Activated T-helper 1 cell treated with anti-CD3 and anti-CD28 coated beads, Interleukin-12 subunit alpha, Interleukin-12 subunit beta, Interleukin-2, Interleukin-4 antibody, amounts not matched to agents 30 ng/mL and 10 ng/mL and 1 ng/mL, durations not matched to agents 14 hours and 24 hours and 36 hours (primary cell): ENCODE measurements at regions of chr13 and their contacts with region 1.

Region 1: DNA sequence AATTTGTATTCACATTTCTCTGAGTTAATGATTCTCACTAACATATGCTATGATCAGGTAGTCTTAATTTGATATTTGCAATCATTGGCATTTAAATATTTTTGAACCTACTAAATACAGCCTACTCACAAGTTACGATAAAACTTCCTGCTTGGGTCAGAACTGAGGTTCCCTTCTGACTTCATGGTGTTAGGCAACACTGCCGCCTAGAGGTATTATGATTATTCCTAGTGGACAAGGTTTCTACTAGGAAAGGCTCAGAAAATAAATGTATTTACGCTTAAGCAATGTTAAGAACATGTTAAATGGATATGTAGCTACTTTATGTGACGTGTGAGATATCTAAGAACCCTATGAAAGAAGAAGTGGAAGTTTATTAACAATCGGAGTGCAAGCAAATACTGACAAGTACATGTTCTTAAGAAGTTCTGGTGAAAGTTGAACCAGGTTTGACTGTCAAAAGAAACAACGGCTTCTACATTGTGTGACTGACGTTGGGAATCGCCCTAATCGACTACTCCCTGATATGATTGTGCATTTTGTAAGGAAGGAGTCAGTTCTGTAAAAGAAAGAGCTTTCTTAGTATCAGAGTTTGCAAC is 1395.8 kb downstream of the SLITRK5 start:
- DNase-seq: no peak
- H3K4me3 Mint-ChIP-seq: no peak overlapping the region
- H3K27ac Mint-ChIP-seq: no peak overlapping the region
- H3K4me1 Mint-ChIP-seq: no peaks in the 10 kb centered on the region
- H3K27me3 Mint-ChIP-seq: no peaks in the 10 kb centered on the region

Region 2: DNA sequence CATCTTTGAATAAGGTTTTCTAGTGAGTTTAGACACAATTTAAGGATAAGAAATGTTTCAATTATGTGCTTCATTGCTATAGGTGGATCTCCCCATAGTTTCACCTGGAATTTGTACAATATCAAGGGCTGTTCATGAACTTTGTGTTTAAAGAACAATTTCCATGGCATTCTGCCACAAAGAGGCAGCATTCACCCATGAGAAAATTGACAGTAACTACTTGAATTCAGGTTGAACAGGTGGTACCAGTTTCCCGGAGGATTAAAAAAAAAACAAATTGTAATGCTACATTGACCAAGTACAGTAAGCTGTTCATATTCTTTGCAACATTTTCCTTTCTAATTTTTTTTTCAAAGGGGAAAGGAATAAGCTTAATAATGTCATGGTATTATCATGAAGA is 1386.7 kb before region 1 on chr13:
- intact Hi-C with region 1: loop called (anchors 5 kb)
- DNase-seq: no peak
- H3K4me3 Mint-ChIP-seq: no peak overlapping the region
- H3K27ac Mint-ChIP-seq: no peak overlapping the region
- H3K4me1 Mint-ChIP-seq: peaks cover 4% of the 10 kb centered on the region
- H3K27me3 Mint-ChIP-seq: peaks cover 13% of the 10 kb centered on the region

Region 3: DNA sequence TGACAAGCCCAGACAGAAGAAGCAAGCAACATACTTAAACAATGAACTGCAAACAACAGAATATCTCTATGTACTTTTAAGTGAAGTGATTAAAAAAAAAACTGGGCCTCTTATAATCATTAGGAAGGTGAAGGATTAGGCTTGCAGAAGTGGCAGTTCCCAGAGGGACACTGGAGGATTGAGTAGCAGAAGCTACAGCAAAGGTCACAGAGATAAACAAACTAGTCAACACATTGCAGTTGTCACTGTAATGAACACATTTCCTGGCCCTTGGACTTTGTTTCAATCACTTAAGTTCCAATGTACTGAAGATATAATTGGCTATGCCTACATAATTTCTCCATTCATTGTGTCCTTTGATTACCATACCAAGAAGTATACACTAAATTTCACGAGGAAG is 103.0 kb after region 1 on chr13:
- intact Hi-C with region 1: no loop called
- DNase-seq: no peak
- H3K4me3 Mint-ChIP-seq: no peak overlapping the region
- H3K27ac Mint-ChIP-seq: no peak overlapping the region
- H3K4me1 Mint-ChIP-seq: no peaks in the 10 kb centered on the region
- H3K27me3 Mint-ChIP-seq: no peaks in the 10 kb centered on the region